Right cardiac atrium (tissue), 5 donors: ENCODE measurements at regions of chr19 and their contacts with region 1.

Region 1: DNA sequence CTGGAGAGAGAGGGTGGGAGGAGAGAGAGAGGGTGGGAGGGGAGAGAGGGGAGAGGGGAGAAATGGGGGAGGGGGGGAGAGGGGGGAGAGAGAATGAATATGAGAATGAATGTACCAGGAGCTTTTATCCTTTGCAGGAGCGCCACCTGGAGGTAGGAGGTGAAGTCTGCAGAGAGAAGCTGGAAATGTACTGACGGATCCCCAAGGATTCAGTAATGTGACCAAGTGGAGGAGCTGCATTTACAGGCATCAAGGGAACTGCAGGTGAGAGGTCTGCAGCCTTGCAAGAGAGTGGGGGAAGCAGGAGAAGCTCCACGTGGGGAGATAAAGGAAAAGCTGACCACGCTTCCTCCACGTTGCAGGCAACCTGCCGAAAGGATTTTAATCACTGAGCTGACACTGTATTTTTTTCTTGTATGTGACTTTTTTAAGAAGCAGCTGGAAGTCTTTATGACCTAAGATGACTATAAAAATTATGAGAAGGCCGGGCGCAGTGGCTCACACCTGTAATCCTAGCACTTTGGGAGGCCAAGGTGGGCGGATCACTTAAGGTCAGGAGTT is 33.7 kb downstream of the VSTM1 start:
- DNase-seq: peak in 2 of 3 donors; percentile 32 to 66
- ATAC-seq: peak in 1 of 2 donors; percentile 45
- H3K4me3 ChIP-seq: no peak overlapping the region
- H3K27ac ChIP-seq: no peak overlapping the region
- H3K4me1 ChIP-seq: no peaks in the 10 kb centered on the region
- H3K27me3 ChIP-seq: no peaks in the 10 kb centered on the region

Region 2: DNA sequence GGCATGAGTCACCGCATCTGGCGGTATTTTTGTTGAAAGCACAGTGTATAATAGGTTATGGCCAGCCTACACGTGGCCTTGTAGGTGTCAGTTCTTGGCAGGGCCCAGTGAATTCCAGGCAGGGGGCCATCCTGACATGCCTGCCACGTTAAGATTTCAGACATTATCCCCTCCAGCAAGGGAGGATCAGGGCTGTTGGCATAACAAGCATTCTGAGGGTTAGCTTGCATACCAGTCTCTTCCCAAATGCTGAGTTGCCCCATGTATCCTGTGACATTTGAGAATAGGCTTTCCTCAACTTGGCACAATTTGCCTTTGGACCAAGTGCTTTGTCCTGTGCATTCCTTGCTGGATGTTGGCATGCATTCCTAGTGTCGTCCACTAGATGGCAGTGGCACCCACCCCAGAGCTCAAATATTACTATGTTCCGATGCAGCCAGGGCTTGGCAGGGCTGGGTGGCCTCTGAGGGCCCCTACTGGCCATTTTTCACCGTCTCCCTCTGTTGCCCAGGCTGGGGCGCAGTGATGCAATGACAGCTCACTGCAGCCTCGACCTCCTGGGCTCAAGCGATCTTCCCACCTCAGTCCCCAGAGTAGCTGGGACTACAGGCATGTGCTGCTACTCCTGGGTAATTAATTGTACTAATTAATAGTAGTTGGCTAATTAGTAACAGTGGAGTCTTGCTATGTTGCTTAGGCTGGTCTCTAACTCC is 237.1 kb before region 1 on chr19:
- intact Hi-C with region 1: loop called in 2 of 4 experiments (anchors 10 kb)
- DNase-seq: peak; percentile 85 to 92 (median 90)
- ATAC-seq: peak; percentile 95 to 98
- H3K4me3 ChIP-seq: no peak overlapping the region
- H3K27ac ChIP-seq: no peak overlapping the region
- H3K4me1 ChIP-seq: no peaks in the 10 kb centered on the region
- H3K27me3 ChIP-seq: no peaks in the 10 kb centered on the region

Region 3: DNA sequence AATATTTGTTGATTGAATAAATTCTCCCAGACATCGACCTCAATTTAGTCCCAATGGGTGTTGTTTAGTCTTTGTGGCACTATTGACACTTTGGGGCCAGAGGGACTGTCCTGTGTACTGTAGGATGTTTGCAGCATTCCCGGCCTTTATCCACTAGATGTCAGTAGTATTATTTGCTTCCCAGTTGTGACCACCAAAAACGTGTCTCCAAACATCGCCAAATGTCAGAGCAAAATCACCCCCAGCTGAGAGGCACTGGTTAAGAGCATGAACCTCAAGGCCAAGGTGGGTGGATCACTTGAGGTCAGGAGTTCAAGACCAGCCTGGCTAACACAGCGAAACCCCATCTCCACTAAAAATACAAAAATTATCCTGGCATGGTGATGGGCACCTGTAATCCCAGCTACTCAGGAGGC is 221.3 kb before region 1 on chr19:
- intact Hi-C with region 1: loop called in 1 of 4 experiments (anchors 10 kb)
- DNase-seq: no peak
- ATAC-seq: peak in 1 of 2 donors; percentile 53
- H3K4me3 ChIP-seq: no peak overlapping the region
- H3K27ac ChIP-seq: no peak overlapping the region
- H3K4me1 ChIP-seq: no peaks in the 10 kb centered on the region
- H3K27me3 ChIP-seq: no peaks in the 10 kb centered on the region

Region 4: GRCh38 chr19:53849237-53849676 is 180.8 kb before region 1 on chr19:
- intact Hi-C with region 1: loop called in 1 of 4 experiments (anchors 10 kb)
- DNase-seq: no peak
- ATAC-seq: peak; percentile 48 to 86
- H3K4me3 ChIP-seq: no peak overlapping the region
- H3K27ac ChIP-seq: peak overlapping the region; percentile 50
- H3K4me1 ChIP-seq: no peaks in the 10 kb centered on the region
- H3K27me3 ChIP-seq: no peaks in the 10 kb centered on the region

Region 5: GRCh38 chr19:53906211-53907192 is 123.5 kb before region 1 on chr19:
- intact Hi-C with region 1: loop called in 2 of 4 experiments (anchors 10 kb)
- DNase-seq: peak in 2 of 3 donors; percentile 68 to 83
- ATAC-seq: peak in 1 of 2 donors; percentile 64
- H3K4me3 ChIP-seq: no peak overlapping the region
- H3K27ac ChIP-seq: no peak overlapping the region
- H3K4me1 ChIP-seq: no peaks in the 10 kb centered on the region
- H3K27me3 ChIP-seq: no peaks in the 10 kb centered on the region